Vagina (tissue), 2 donors: ENCODE measurements at regions of chr11 and their contacts with region 1.

Region 1: GRCh38 chr11:1515082-1516060 is 28.8 kb upstream of the MOB2 start:
- DNase-seq: no peak
- H3K4me3 ChIP-seq: peak overlapping the region in 1 of 2 donors; percentile 25
- H3K27ac ChIP-seq: no peak overlapping the region
- H3K4me1 ChIP-seq: peaks cover 72% of the 10 kb centered on the region
- H3K27me3 ChIP-seq: no peaks in the 10 kb centered on the region
- CTCF ChIP-seq: peak; percentile 86 to 92 (median 90)
- POLR2A ChIP-seq: no peak

Region 2: GRCh38 chr11:1073261-1073724 is 442.1 kb before region 1 on chr11:
- intact Hi-C with region 1: no loop called
- DNase-seq: no peak
- H3K4me3 ChIP-seq: no peak overlapping the region
- H3K27ac ChIP-seq: no peak overlapping the region
- H3K4me1 ChIP-seq: peaks cover 12% of the 10 kb centered on the region
- H3K27me3 ChIP-seq: no peaks in the 10 kb centered on the region
- CTCF ChIP-seq: no peak
- POLR2A ChIP-seq: no peak

Region 3: DNA sequence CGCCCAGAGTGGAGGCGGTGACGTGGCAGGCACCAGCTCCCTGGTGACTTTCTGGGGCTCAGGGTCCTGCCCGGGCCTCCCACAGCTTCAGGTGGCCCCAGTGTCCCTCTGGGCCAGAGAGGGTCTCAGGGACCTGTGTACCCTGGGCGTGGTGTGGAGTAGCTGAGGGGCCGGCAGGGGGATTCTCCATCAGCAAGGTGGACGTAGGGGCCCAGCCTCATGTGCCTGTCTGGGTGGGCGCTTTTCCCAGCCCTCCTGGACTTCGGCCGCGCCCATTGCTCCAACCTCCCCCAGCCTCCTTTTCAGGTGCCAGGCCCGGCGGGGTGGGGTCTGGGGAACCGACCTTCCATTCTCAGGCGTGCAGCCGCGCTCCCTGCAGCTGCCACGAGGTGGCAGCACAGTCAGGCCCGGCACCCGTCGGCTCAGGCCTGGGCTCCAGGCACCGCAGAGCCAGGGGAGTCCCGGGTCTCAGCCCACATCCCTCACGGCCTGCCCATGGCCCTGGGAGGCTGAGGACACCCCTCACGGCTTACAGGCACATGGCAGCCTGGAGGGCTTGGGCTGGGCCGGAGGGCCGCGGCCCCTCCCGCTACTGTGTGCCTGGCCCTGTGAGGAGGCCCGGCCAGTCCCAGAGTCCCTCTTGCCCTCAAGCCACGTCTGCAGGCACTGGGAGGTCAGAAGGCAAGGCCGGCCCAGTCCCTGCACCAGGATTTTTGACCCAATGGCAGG is 312.4 kb before region 1 on chr11:
- intact Hi-C with region 1: loop called (anchors 5 kb)
- DNase-seq: no peak
- H3K4me3 ChIP-seq: no peak overlapping the region
- H3K27ac ChIP-seq: no peak overlapping the region
- H3K4me1 ChIP-seq: peaks cover 12% of the 10 kb centered on the region
- H3K27me3 ChIP-seq: no peaks in the 10 kb centered on the region
- CTCF ChIP-seq: peak; percentile 63 to 96 (median 78)
- POLR2A ChIP-seq: no peak

Region 4: DNA sequence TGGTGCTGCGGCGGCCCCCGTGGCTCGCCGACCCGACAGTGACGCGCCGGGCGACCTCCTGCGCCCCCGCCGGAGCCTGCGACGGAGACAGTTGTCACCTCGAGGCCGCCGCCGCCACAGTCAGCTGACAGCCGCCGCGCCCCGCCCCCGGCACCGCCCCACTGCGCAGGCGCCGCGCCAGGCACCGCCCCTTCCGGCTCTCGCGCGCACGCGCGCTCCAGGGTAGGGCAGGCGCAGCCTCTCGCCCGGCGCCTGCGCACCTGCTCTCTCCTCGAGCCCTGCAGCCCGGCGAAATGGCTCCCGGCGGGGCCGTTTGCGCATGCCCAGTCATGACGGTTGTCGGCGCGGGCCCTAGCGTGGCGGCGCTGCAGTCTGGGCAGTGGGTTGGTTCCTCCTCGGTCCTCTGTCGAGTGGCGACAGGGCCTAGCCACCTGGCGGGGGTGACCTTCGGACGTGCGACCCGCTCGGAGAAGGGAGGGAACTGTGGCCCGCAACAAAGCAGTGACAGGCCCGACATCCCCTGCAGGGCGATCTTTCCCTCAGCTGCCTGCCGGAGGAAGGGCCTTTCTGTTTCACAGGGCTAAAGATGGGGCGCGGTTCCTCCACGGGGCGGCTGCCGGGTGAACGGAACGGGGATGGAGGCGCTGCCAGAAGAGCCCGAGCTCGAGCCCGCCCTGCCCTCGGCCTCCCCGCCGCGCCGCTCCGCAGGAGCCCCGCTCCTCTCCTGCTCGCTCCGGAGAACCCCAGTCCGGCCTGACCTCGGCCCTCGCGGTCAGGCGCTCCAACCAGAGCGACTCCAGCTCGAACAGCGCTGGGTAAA is 205.7 kb before region 1 on chr11 and contains the start of gene TOLLIP:
- intact Hi-C with region 1: loop called (anchors 10 kb)
- DNase-seq: peak; percentile 96 to 97
- H3K4me3 ChIP-seq: peak within 1 kb of the TSS; percentile 76 to 87
- H3K27ac ChIP-seq: peak within 1 kb of the TSS; percentile 96
- H3K4me1 ChIP-seq: peaks cover 53% of the 10 kb centered on the region
- H3K27me3 ChIP-seq: no peaks in the 10 kb centered on the region
- CTCF ChIP-seq: peak; percentile 12 to 57 (median 47)
- POLR2A ChIP-seq: peak in 1 of 2 donors; percentile 81
- total RNA-seq, gene TOLLIP: 52.5 TPM

Region 5: GRCh38 chr11:1458340-1459218 is 56.8 kb before region 1 on chr11:
- intact Hi-C with region 1: loop called (anchors 5 kb)
- DNase-seq: no peak
- H3K4me3 ChIP-seq: peak overlapping the region; percentile 32 to 44
- H3K27ac ChIP-seq: peak overlapping the region; percentile 78
- H3K4me1 ChIP-seq: peaks cover 37% of the 10 kb centered on the region
- H3K27me3 ChIP-seq: no peaks in the 10 kb centered on the region
- CTCF ChIP-seq: peak in 2 of 3 experiments; percentile 21 to 22
- POLR2A ChIP-seq: no peak